Common myeloid progenitor, CD34-positive (primary cell): ENCODE measurements at regions of chr2 and their contacts with region 1.

Region 1: GRCh38 chr2:130920415-130921163 is 83.9 kb downstream of the ARHGEF4 start:
- DNase-seq: peak; percentile 38 to 57 (median 40)
- H3K4me3 ChIP-seq: no peak overlapping the region
- H3K27ac ChIP-seq: no peak overlapping the region
- H3K4me1 ChIP-seq: no peaks in the 10 kb centered on the region
- H3K27me3 ChIP-seq: peaks cover 0 to 36% (median 8%) of the 10 kb centered on the region in 5 experiments

Region 2: GRCh38 chr2:130797493-130798435 is 122.8 kb before region 1 on chr2:
- CTCF ChIA-PET with region 1: interaction called, 13 read pairs
- POLR2A ChIA-PET with region 1: no interaction called
- DNase-seq: peak; percentile 83 to 87 (median 85)
- H3K4me3 ChIP-seq: peak overlapping the region; percentile 39 to 85 (median 76)
- H3K27ac ChIP-seq: no peak overlapping the region
- H3K4me1 ChIP-seq: peaks cover 0 to 17% (median 14%) of the 10 kb centered on the region in 4 experiments
- H3K27me3 ChIP-seq: peaks cover 4 to 40% (median 10%) of the 10 kb centered on the region in 5 experiments